Ascending aorta (tissue), 2 donors: ENCODE measurements at regions of chr9 and their contacts with region 1.

Region 1: DNA sequence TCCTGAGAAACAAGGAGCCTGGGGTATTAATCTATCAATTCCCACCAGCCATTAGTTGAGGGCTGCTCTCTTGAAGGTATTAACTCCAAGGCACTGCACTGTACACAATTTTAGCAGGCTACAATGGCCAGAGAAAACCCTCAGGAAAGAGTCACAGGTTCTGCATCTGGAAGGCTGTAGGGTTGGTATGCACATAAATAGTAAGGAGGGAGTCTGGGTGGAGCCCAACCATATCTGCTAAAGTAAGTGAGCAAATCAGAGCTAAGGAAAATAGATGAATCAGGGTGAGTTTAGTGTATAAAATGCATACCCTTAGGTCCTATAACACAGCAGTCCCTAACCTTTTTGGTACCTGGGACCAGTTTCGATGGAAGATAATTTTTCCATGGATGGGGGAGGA is 18.2 kb downstream of the TMEM215 start:
- DNase-seq: no peak
- H3K4me3 ChIP-seq: no peak overlapping the region
- H3K27ac ChIP-seq: no peak overlapping the region
- H3K4me1 ChIP-seq: no peaks in the 10 kb centered on the region
- H3K27me3 ChIP-seq: no peaks in the 10 kb centered on the region
- CTCF ChIP-seq: no peak

Region 2: DNA sequence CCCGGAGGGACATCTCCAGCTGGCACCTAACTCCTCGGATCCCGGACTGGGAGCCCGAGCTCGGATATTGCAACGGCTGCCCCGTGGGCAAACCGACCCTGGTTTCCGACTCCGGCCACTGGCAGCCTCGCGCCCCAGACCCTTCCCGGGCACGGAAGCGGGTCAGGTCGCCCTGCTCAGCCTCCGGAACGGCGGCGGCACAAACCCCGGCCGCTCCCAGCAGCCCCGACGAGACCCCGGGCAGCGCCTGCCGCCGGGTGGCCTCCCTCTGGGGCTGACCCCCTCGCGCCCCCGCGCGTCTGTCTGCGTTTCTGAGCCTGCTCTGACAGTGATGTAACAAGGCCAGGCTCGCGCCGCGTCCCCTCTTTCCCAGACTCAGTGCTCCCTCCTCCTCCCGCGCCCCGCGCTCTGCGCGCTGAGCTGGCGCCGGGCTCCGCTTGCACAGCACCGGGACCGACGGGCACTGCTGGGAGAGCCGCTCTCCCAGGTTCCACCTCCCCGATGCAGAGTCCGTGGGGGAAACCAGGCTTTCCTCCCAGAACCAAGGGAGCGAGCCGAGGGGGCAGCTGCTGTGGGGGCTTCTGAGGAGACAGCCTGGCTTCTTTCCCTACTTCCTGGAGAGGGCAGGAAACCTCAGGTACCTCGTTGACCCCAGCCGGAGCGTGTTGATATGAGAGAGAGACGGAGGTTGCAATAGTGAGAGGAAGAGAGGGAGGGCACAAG is 18.2 kb before region 1 on chr9 and contains the start of gene TMEM215:
- intact Hi-C with region 1: loop called (anchors 2 kb)
- DNase-seq: no peak
- H3K4me3 ChIP-seq: no peak within 1 kb of the TSS
- H3K27ac ChIP-seq: no peak within 1 kb of the TSS
- H3K4me1 ChIP-seq: no peaks in the 10 kb centered on the region
- H3K27me3 ChIP-seq: no peaks in the 10 kb centered on the region
- CTCF ChIP-seq: no peak
- total RNA-seq, gene TMEM215: 0.75 TPM

Region 3: GRCh38 chr9:32899181-32899580 is 97.7 kb after region 1 on chr9:
- intact Hi-C with region 1: no loop called
- DNase-seq: no peak
- H3K4me3 ChIP-seq: no peak overlapping the region
- H3K27ac ChIP-seq: no peak overlapping the region
- H3K4me1 ChIP-seq: no peaks in the 10 kb centered on the region
- H3K27me3 ChIP-seq: no peaks in the 10 kb centered on the region
- CTCF ChIP-seq: no peak

Region 4: DNA sequence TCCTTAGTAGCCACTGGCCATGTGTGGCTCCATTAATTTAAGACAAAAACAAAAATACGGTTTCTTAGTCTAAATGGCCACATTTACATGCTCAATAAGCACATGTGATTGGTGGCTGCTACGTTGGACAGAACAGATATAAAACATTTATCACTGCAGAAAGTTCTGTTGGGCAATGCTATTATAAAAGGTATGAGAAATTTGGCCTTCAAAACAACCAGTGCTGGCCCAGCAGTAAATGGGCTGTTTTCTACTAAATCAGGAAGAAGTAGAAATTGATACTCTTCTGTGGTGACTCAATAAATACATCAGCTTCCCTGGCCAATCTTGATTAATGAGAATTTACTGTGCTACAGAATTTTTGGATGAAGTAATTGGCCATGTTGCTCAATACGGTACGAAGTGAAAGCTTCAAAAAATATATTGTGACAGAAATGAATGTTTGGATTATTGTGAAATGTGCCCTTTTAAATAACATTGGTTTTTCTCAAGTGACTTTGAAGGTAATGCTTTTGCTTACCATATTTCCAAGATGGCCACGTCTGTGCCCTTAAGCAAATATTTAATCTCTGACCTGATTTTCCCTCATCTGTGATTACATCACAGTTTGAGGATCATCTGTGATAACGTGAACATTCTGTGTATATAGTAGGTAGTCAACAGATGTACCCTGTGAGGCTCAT is 227.7 kb after region 1 on chr9:
- intact Hi-C with region 1: no loop called
- DNase-seq: no peak
- H3K4me3 ChIP-seq: peak overlapping the region in 1 of 2 donors; percentile 5
- H3K27ac ChIP-seq: no peak overlapping the region
- H3K4me1 ChIP-seq: peaks cover 3 to 22% of the 10 kb centered on the region in 2 donors
- H3K27me3 ChIP-seq: no peaks in the 10 kb centered on the region
- CTCF ChIP-seq: no peak